PC-9 (cell line): ENCODE measurements at regions of chr5 and their contacts with region 1.

Region 1: GRCh38 chr5:74316064-74316679 is 324.4 kb downstream of the ENC1 start:
- DNase-seq: peak; percentile 94 to 98
- H3K4me3 ChIP-seq: no peak overlapping the region
- H3K27ac ChIP-seq: peak overlapping the region; percentile 98
- H3K4me1 ChIP-seq: peaks cover 65% of the 10 kb centered on the region
- H3K27me3 ChIP-seq: no peaks in the 10 kb centered on the region
- CTCF ChIP-seq: no peak

Region 2: GRCh38 chr5:73938280-73938937 is 377.8 kb before region 1 on chr5:
- CTCF ChIA-PET with region 1: no interaction called
- POLR2A ChIA-PET with region 1: no interaction called
- intact Hi-C with region 1: loop called (anchors 1 kb)
- DNase-seq: peak; percentile 77 to 98
- H3K4me3 ChIP-seq: peak overlapping the region; percentile 28; the same call in 1 of the 2 replicates
- H3K27ac ChIP-seq: peak overlapping the region; percentile 98
- H3K4me1 ChIP-seq: peaks cover 33% of the 10 kb centered on the region
- H3K27me3 ChIP-seq: no peaks in the 10 kb centered on the region
- CTCF ChIP-seq: no peak

Region 3: DNA sequence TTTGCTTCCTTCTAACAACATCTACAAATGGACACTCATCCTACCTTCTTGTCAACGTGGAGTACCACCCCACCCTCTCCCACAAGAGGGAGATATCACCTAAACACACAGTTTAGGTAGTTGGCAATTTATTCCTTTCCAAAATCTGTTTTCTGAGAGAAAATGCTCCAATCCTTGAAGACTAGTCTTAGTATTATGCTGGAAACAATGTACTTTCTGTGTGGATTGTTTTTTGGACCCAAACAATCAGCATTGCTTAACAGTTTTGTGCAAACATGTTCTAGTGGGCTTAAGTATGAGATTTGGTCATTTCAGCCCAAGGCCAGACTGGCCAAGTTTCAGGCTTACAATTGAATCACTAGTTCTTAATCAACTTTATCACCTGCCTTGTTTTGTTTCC is 331.0 kb before region 1 on chr5:
- CTCF ChIA-PET with region 1: no interaction called
- POLR2A ChIA-PET with region 1: no interaction called
- intact Hi-C with region 1: loop called (anchors 1 kb)
- DNase-seq: peak; percentile 25 to 46
- H3K4me3 ChIP-seq: no peak overlapping the region
- H3K27ac ChIP-seq: no peak overlapping the region; the same call in 1 of the 2 replicates
- H3K4me1 ChIP-seq: no peaks in the 10 kb centered on the region; the same call in 1 of the 2 replicates
- H3K27me3 ChIP-seq: no peaks in the 10 kb centered on the region
- CTCF ChIP-seq: peak; percentile 73

Region 4: DNA sequence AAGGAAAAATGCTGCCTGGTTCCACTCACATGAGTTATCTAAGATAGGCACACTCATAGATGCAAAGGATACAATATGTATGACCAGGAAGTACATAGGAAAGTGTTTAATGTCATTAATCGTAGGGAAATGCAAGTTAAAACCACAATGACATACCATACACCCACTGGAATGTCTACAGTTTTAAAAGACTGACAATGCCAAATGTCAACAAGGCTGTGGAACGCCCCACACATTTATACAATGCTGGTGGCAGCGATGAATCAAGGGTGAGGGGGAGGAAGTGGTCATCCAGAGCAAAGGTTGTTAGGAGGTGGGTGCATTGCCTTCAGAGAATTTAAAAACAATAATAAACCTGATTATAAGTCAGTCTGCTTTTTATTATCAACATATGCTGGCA is 252.4 kb before region 1 on chr5:
- CTCF ChIA-PET with region 1: no interaction called
- POLR2A ChIA-PET with region 1: no interaction called
- intact Hi-C with region 1: loop called (anchors 1 kb)
- DNase-seq: peak; percentile 70 to 98
- H3K4me3 ChIP-seq: no peak overlapping the region
- H3K27ac ChIP-seq: peak overlapping the region; percentile 79
- H3K4me1 ChIP-seq: peaks cover 52% of the 10 kb centered on the region
- H3K27me3 ChIP-seq: no peaks in the 10 kb centered on the region
- CTCF ChIP-seq: no peak

Region 5: DNA sequence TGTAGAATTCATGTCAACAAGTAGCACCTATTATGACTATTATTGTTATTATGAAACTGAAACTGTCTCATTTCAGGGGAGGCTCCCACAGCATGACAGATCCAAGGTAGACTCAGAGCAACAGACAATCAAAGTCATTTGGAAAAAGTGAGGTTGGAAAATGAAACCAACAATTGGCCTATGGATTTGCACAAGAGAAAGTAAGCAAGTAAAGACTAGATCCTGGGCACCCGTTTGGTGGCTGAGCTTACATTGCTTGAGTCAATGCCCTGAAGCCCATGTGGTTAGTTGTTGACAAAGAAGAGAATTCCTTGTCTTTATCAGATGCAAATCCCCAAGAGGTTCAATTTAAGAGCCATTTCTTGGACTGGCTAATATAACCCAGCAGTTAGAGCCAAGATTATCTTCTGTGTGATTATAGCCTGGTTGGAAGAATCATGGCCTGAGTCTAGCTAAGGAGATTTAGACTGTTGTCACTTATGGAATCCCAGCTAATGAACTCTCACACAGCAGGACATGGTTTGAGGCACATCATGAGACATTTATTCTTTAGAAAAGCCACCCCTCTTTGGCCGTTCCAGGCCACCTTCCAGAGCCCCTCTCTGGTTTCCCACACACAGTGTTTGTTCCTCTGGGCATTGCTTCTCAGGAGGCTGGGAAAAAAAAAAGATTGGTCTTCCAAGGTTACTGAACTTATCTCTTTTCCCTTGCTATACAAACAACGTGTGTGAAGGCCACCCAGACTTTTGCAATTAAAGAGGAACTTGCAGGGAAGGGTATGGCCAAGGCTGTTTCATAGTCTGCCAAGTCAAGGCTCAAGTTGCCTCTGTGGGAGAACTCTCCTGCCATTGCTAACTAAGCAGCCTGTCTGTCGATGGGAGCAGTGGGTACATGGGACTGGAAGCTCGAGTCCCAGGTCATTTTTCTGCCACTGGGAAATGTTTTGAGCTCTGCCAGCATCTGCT is 75.1 kb before region 1 on chr5:
- CTCF ChIA-PET with region 1: interaction called, 3 read pairs
- POLR2A ChIA-PET with region 1: no interaction called
- intact Hi-C with region 1: loop called (anchors 1 kb)
- DNase-seq: peak; percentile 50 to 96
- H3K4me3 ChIP-seq: peak overlapping the region; percentile 38; the same call in 1 of the 2 replicates
- H3K27ac ChIP-seq: peak overlapping the region; percentile 100
- H3K4me1 ChIP-seq: peaks cover 60% of the 10 kb centered on the region
- H3K27me3 ChIP-seq: no peaks in the 10 kb centered on the region
- CTCF ChIP-seq: 0 out of 2 replicates have a peak, but pooled peaks have one; percentile 11

Region 6: GRCh38 chr5:74272024-74272775 is 44.0 kb before region 1 on chr5:
- CTCF ChIA-PET with region 1: interaction called, 3 read pairs
- POLR2A ChIA-PET with region 1: interaction called, 5 read pairs
- intact Hi-C with region 1: loop called (anchors 1 kb)
- DNase-seq: peak; percentile 59 to 80
- H3K4me3 ChIP-seq: no peak overlapping the region
- H3K27ac ChIP-seq: peak overlapping the region; percentile 71
- H3K4me1 ChIP-seq: peaks cover 22% of the 10 kb centered on the region
- H3K27me3 ChIP-seq: no peaks in the 10 kb centered on the region
- CTCF ChIP-seq: no peak

Region 7: DNA sequence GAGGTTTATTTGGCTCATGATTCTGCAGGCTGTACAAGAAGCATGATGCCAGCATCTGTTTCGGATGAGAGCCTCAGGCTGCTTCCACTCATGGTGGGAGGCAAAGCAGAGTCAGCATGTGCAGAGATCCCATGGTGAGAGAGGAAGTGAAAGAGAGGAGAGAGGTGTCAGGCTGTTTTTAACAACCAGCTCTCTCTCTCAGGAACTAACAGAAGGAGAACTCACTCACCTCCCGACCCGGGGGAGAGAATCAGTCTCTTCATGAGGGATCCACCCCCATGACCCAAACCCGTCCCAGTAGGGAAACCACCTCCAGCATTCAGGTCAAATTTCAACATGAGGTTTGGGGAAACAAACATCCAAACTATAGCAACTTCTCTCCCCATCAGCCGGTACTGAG is 136.7 kb after region 1 on chr5:
- CTCF ChIA-PET with region 1: no interaction called
- POLR2A ChIA-PET with region 1: no interaction called
- intact Hi-C with region 1: no loop called
- DNase-seq: no peak
- H3K4me3 ChIP-seq: no peak overlapping the region
- H3K27ac ChIP-seq: no peak overlapping the region
- H3K4me1 ChIP-seq: no peaks in the 10 kb centered on the region
- H3K27me3 ChIP-seq: no peaks in the 10 kb centered on the region
- CTCF ChIP-seq: no peak

Region 8: DNA sequence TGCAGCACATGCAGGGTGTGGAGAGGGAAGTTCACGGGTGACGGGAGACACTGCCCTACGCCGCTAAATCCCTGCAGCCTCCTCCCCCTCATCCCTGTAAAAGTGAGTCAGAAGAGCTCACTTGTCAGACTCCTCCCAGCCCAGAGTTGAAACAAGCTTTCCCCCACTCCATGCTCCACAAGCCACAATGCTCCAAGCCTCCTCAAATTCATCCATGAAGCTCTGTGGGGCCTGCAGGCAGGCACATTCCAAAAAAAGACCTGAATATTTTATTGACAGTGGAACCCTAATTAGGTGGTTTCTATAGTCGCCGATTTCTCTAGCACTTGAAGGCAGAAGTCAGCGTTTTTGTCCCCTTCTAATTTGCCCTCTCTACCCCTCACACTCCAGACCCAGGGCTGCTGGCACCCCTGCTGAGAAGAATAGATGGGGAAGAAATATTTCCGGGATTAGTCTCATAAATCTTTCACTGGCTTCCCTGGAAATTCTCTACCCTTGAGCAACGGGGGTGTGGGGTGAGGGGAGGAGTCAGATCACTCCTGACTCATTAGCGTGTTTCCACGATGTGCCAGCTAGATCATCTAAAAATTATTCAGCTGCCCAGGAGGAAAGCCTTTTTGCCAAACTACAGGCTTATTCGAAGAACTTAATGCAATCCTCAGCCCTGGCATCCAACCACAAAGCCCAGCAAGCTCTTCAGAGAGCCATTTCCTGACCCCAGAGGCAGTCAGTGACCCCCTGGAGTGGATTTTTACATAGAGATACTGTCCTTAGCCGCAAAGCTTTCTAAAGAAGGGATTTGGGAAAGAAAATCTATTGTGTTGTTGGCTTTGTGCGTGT is 227.2 kb after region 1 on chr5:
- CTCF ChIA-PET with region 1: no interaction called
- POLR2A ChIA-PET with region 1: no interaction called
- intact Hi-C with region 1: loop called (anchors 1 kb)
- DNase-seq: peak; percentile 86 to 97
- H3K4me3 ChIP-seq: peak overlapping the region; percentile 31; the same call in 1 of the 2 replicates
- H3K27ac ChIP-seq: peak overlapping the region; percentile 95
- H3K4me1 ChIP-seq: peaks cover 73% of the 10 kb centered on the region
- H3K27me3 ChIP-seq: no peaks in the 10 kb centered on the region
- CTCF ChIP-seq: no peak

Region 9: DNA sequence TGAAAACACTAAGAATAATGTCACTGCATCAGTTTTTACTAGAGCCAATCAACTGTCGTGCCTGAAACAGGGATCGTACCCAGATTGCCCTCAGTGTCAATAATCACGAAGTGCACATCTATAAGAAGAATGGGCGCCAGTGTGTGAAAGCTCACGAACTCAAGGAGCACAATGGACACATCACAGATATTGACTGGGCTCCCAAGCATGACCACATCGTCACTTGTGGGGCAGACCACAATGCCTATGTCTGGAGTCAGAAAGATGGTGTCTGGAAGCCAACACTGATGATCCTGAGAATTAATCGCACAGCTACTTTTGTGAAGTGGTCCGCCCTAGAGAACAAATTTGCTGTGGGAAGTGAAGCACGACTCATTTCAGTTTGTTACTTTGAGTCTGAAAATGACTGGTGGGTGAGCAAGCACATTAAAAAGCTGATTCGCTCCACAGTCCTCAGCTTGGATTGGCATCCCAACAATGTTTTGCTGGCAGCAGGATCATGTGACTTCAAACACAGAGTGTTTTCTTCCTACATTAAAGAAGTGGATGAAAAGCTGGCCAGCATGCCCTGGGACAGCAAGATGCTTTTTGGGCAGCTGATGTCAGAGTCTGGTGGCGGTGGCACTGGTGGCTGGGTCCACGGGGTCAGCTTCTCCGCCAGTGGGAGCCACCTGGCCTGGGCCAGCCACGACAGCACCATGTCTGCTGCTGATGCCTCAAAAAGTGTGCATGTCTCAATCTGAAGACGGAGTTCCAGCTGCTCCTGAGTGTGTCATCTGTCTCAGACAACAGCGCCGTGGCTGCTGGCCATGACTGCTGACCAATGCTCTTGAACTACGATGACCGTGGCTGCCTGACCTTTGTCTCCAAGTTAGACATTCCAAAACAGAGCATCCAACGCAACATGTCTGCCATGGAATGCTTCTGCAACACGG is 483.1 kb after region 1 on chr5:
- CTCF ChIA-PET with region 1: no interaction called
- POLR2A ChIA-PET with region 1: no interaction called
- intact Hi-C with region 1: no loop called
- DNase-seq: no peak
- H3K4me3 ChIP-seq: no peak overlapping the region
- H3K27ac ChIP-seq: no peak overlapping the region
- H3K4me1 ChIP-seq: no peaks in the 10 kb centered on the region
- H3K27me3 ChIP-seq: no peaks in the 10 kb centered on the region
- CTCF ChIP-seq: no peak

Region 10: GRCh38 chr5:74919487-74919886 is 603.3 kb after region 1 on chr5:
- CTCF ChIA-PET with region 1: no interaction called
- POLR2A ChIA-PET with region 1: no interaction called
- intact Hi-C with region 1: no loop called
- DNase-seq: peak in 1 of 2 experiments; percentile 47
- H3K4me3 ChIP-seq: no peak overlapping the region
- H3K27ac ChIP-seq: no peak overlapping the region
- H3K4me1 ChIP-seq: peaks cover 22% of the 10 kb centered on the region
- H3K27me3 ChIP-seq: no peaks in the 10 kb centered on the region
- CTCF ChIP-seq: peak; percentile 72

Region 11: GRCh38 chr5:75656311-75657003 is 1340.3 kb after region 1 on chr5:
- CTCF ChIA-PET with region 1: no interaction called
- POLR2A ChIA-PET with region 1: no interaction called
- intact Hi-C with region 1: no loop called
- DNase-seq: no peak
- H3K4me3 ChIP-seq: no peak overlapping the region
- H3K27ac ChIP-seq: no peak overlapping the region
- H3K4me1 ChIP-seq: no peaks in the 10 kb centered on the region
- H3K27me3 ChIP-seq: no peaks in the 10 kb centered on the region
- CTCF ChIP-seq: no peak